ENCODE measurements at regions of chr21 and their contacts with region 1.

Region 1: GRCh38 chr21:29024474-29025327 is at the start of gene USP16:
- DNase-seq: peak; percentile 95
- ATAC-seq: peak; percentile 93
- H3K4me3 Mint-ChIP-seq: peak within 1 kb of the TSS; percentile 87
- H3K27ac Mint-ChIP-seq: peak within 1 kb of the TSS; percentile 96
- H3K4me1 Mint-ChIP-seq: peaks cover 58% of the 10 kb centered on the region
- H3K27me3 Mint-ChIP-seq: no peaks in the 10 kb centered on the region
- CTCF ChIP-seq: no peak
- total RNA-seq, gene USP16: 39.9 TPM

Region 2: GRCh38 chr21:28992526-28993292 is 32.0 kb before region 1 on chr21 and contains the start of gene LTN1:
- CTCF ChIA-PET with region 1: interaction called, 4 read pairs
- POLR2A ChIA-PET with region 1: interaction called, 30 read pairs
- intact Hi-C with region 1: loop called (anchors 2 kb)
- DNase-seq: peak; percentile 100
- ATAC-seq: peak; percentile 91
- H3K4me3 Mint-ChIP-seq: peak within 1 kb of the TSS; percentile 82
- H3K27ac Mint-ChIP-seq: peak within 1 kb of the TSS; percentile 92
- H3K4me1 Mint-ChIP-seq: peaks cover 41% of the 10 kb centered on the region
- H3K27me3 Mint-ChIP-seq: no peaks in the 10 kb centered on the region
- CTCF ChIP-seq: no peak
- total RNA-seq, gene LTN1: 26.7 to 28.0 TPM

Region 3: DNA sequence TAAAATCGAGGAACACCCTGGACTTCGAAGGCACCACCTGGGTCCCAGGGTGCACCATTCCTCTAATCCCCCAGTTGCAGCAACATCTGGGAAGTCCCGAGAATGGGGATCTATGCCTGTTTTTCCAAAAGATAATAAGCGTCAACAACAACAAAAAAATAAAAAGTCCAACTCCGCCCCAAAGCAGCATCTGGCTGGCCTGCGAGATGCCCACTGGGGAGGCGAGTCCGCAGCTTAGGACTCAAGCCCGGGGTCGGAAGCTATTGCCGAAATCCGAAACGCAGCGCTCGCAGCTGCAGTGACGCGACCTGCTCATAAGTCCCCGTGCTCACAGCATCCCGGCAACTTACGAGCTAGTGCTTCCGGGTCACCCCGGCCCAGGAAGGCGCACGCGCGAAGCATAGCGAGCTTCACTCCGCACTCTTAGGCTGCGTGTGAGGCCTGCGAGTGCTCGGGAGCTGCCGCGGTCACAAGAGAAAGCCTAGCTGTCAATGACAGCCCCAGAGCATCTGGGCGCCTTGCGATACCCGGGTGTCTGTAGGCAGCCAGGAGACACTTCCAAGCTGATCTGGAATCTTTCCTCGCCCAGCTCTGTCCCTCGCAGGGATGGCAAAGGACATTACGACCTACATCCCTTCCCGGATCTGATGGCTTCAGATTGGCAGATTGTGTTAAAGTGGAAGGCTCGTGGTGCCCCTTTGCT is 22.1 kb before region 1 on chr21:
- CTCF ChIA-PET with region 1: interaction called, 4 read pairs
- POLR2A ChIA-PET with region 1: interaction called, 52 read pairs
- intact Hi-C with region 1: no loop called
- DNase-seq: peak; percentile 96
- ATAC-seq: peak; percentile 100
- H3K4me3 Mint-ChIP-seq: peak overlapping the region; percentile 91
- H3K27ac Mint-ChIP-seq: peak overlapping the region; percentile 97
- H3K4me1 Mint-ChIP-seq: peaks cover 13% of the 10 kb centered on the region
- H3K27me3 Mint-ChIP-seq: no peaks in the 10 kb centered on the region
- CTCF ChIP-seq: no peak